Mammary epithelial cell (primary cell): ENCODE measurements at regions of chr3 and their contacts with region 1.

Region 1: GRCh38 chr3:133188996-133189395 is 150.8 kb downstream of the TMEM108 start:
- DNase-seq: no peak
- H3K4me3 ChIP-seq: no peak overlapping the region
- H3K27ac ChIP-seq: no peak overlapping the region
- H3K4me1 ChIP-seq: no peaks in the 10 kb centered on the region
- H3K27me3 ChIP-seq: peaks cover 2% of the 10 kb centered on the region
- CTCF ChIP-seq: no peak

Region 2: GRCh38 chr3:133230195-133230594 is 41.2 kb after region 1 on chr3:
- CTCF ChIA-PET with region 1: no interaction called
- dilution Hi-C with region 1: loop called (anchors 10 kb)
- in situ Hi-C with region 1: no loop called
- intact Hi-C with region 1: no loop called
- DNase-seq: no peak
- H3K4me3 ChIP-seq: no peak overlapping the region
- H3K27ac ChIP-seq: no peak overlapping the region
- H3K4me1 ChIP-seq: no peaks in the 10 kb centered on the region
- H3K27me3 ChIP-seq: peaks cover 3% of the 10 kb centered on the region
- CTCF ChIP-seq: no peak

Region 3: GRCh38 chr3:133246119-133246518 is 57.1 kb after region 1 on chr3:
- CTCF ChIA-PET with region 1: no interaction called
- dilution Hi-C with region 1: no loop called
- in situ Hi-C with region 1: no loop called
- intact Hi-C with region 1: no loop called
- DNase-seq: no peak
- H3K4me3 ChIP-seq: no peak overlapping the region
- H3K27ac ChIP-seq: no peak overlapping the region
- H3K4me1 ChIP-seq: no peaks in the 10 kb centered on the region
- H3K27me3 ChIP-seq: no peaks in the 10 kb centered on the region
- CTCF ChIP-seq: no peak

Region 4: DNA sequence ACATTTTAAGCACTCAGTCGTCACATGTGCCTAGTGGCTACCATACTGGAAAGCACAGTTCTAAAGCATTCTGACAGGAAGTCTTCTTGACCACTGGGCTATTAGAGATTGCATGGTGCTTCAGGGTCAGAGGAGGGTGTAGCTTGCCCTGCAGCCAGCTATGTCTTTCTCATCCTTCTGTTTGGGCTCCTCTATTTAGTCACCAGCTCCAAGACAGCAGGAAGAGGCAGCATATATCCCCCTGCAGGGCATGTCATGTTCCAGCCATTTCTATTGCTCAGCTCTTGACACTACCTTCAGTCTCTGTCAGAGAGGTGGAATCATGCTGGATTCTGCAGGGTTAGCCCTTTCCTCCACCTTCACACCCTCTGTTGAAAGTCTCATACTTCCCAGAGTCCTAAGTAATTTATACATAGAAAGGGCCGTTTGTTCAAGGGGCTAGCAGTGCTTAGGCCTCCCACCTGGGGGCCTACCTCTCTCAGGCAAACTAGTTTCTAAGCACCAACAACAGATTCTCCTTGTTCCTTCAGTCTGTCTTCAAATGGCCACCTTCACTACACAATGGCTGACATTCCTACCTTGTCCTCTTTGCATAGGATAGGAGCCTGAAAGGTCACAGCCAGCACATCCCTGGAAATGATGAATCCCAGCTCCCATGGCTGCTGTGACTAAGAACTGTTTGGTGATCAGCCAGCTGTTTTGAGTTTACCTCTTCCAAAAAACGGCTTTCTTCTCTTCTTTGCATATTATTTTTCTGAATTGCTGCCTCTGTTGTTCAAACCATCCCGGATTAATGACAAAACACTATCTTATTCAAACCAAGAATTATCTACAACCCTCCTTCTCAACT is 95.2 kb after region 1 on chr3:
- CTCF ChIA-PET with region 1: no interaction called
- dilution Hi-C with region 1: loop called (anchors 5 kb)
- in situ Hi-C with region 1: no loop called
- intact Hi-C with region 1: no loop called
- DNase-seq: no peak
- H3K4me3 ChIP-seq: no peak overlapping the region
- H3K27ac ChIP-seq: no peak overlapping the region
- H3K4me1 ChIP-seq: no peaks in the 10 kb centered on the region
- H3K27me3 ChIP-seq: peaks cover 3% of the 10 kb centered on the region
- CTCF ChIP-seq: no peak